GM12878 (cell line): ENCODE measurements at regions of chr1 and their contacts with region 1.

Region 1: DNA sequence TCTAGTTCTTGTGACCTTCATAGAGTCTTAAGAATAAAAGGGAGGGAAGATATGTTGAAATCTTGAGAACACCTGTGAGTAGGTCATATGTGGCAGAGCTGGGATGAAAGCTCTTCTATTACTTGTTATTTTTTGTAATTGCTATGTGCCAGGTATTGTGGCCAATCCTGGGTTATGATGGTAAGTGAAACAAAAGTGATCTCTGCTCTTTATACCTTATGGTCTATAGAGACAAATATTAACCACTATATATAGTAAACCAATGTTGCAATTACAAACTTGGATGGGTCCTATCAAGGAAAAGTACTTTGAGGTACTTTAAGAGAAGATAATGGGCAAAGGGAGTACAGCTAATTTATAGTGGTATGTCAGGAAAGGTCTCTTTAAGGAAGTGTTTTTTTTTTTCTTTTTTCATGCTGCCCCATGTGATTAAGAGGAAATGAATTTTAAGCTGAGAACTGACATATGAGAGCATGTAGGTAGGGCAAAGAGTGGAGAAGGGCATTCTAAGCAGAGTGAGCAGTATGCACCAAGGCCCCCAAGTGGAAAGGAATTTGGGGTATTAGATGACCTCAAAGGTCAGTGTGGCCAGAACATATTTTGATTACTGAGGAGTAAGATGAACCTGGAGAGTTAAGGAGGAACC is 43.3 kb downstream of the POU2F1 start:
- DNase-seq: no peak
- ATAC-seq: peak; percentile 65
- H3K4me3 ChIP-seq: no peak overlapping the region
- H3K27ac ChIP-seq: peak overlapping the region; percentile 42
- H3K4me1 ChIP-seq: peaks cover 10% of the 10 kb centered on the region; the same call in 1 of the 2 replicates
- H3K27me3 ChIP-seq: no peaks in the 10 kb centered on the region
- CTCF ChIP-seq: no peak
- EP300 ChIP-seq: no peak
- POLR2A ChIP-seq: no peak
- RAD21 ChIP-seq: no peak

Region 2: GRCh38 chr1:167076136-167076710 is 187.7 kb before region 1 on chr1:
- CTCF ChIA-PET with region 1: no interaction called
- POLR2A ChIA-PET with region 1: no interaction called
- RAD21 ChIA-PET with region 1: no interaction called
- SMC1A ChIA-PET with region 1: no interaction called
- in situ Hi-C with region 1: no loop called
- intact Hi-C with region 1: no loop called
- DNase-seq: no peak
- ATAC-seq: peak; percentile 49
- H3K4me3 ChIP-seq: no peak overlapping the region
- H3K27ac ChIP-seq: no peak overlapping the region
- H3K4me1 ChIP-seq: no peaks in the 10 kb centered on the region
- H3K27me3 ChIP-seq: no peaks in the 10 kb centered on the region
- CTCF ChIP-seq: no peak
- EP300 ChIP-seq: no peak
- POLR2A ChIP-seq: no peak
- RAD21 ChIP-seq: no peak

Region 3: DNA sequence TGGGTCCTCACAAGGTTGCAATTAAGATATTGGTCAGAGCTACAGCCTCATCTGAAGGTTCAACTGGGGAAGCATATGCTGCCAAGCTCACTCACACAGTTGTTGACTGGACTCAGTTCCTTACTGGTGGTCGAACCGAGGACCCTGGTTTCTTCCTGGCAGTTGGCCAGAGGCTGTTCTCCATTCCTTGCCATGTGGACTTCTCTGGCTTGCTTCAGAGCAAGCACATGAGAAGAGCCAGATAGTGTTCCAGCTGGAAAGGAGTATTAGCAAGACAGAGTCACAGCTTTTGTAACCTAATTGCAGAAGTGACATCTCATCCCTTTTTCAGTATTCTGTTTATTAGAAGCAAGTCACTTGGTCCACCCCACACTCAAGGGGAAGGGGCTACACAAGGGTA is 19.7 kb before region 1 on chr1:
- CTCF ChIA-PET with region 1: interaction called, 15 read pairs
- POLR2A ChIA-PET with region 1: interaction called, 9 read pairs
- RAD21 ChIA-PET with region 1: interaction called, 9 read pairs
- SMC1A ChIA-PET with region 1: interaction called, 73 read pairs
- in situ Hi-C with region 1: no loop called
- intact Hi-C with region 1: no loop called
- DNase-seq: no peak
- ATAC-seq: no peak
- H3K4me3 ChIP-seq: no peak overlapping the region
- H3K27ac ChIP-seq: no peak overlapping the region
- H3K4me1 ChIP-seq: peaks cover 12% of the 10 kb centered on the region
- H3K27me3 ChIP-seq: no peaks in the 10 kb centered on the region
- CTCF ChIP-seq: no peak
- EP300 ChIP-seq: no peak
- POLR2A ChIP-seq: no peak
- RAD21 ChIP-seq: no peak

Region 4: GRCh38 chr1:167297222-167298214 is 33.6 kb after region 1 on chr1:
- CTCF ChIA-PET with region 1: interaction called, 3 read pairs
- POLR2A ChIA-PET with region 1: interaction called, 10 read pairs
- RAD21 ChIA-PET with region 1: interaction called, 4 read pairs
- SMC1A ChIA-PET with region 1: interaction called, 5 read pairs
- in situ Hi-C with region 1: no loop called
- intact Hi-C with region 1: no loop called
- DNase-seq: no peak
- ATAC-seq: 0 out of 3 replicates have a peak, but pooled peaks have one; percentile 22
- H3K4me3 ChIP-seq: no peak overlapping the region
- H3K27ac ChIP-seq: no peak overlapping the region
- H3K4me1 ChIP-seq: no peaks in the 10 kb centered on the region
- H3K27me3 ChIP-seq: no peaks in the 10 kb centered on the region
- CTCF ChIP-seq: no peak
- EP300 ChIP-seq: no peak
- POLR2A ChIP-seq: no peak
- RAD21 ChIP-seq: no peak

Region 5: GRCh38 chr1:167387251-167387910 is 123.4 kb after region 1 on chr1:
- CTCF ChIA-PET with region 1: interaction called, 20 read pairs
- POLR2A ChIA-PET with region 1: no interaction called
- RAD21 ChIA-PET with region 1: interaction called, 5 read pairs
- SMC1A ChIA-PET with region 1: interaction called, 20 read pairs
- in situ Hi-C with region 1: no loop called
- intact Hi-C with region 1: no loop called
- DNase-seq: no peak
- ATAC-seq: no peak
- H3K4me3 ChIP-seq: no peak overlapping the region
- H3K27ac ChIP-seq: no peak overlapping the region
- H3K4me1 ChIP-seq: no peaks in the 10 kb centered on the region
- H3K27me3 ChIP-seq: no peaks in the 10 kb centered on the region
- CTCF ChIP-seq: no peak
- EP300 ChIP-seq: no peak
- POLR2A ChIP-seq: no peak
- RAD21 ChIP-seq: no peak

Region 6: DNA sequence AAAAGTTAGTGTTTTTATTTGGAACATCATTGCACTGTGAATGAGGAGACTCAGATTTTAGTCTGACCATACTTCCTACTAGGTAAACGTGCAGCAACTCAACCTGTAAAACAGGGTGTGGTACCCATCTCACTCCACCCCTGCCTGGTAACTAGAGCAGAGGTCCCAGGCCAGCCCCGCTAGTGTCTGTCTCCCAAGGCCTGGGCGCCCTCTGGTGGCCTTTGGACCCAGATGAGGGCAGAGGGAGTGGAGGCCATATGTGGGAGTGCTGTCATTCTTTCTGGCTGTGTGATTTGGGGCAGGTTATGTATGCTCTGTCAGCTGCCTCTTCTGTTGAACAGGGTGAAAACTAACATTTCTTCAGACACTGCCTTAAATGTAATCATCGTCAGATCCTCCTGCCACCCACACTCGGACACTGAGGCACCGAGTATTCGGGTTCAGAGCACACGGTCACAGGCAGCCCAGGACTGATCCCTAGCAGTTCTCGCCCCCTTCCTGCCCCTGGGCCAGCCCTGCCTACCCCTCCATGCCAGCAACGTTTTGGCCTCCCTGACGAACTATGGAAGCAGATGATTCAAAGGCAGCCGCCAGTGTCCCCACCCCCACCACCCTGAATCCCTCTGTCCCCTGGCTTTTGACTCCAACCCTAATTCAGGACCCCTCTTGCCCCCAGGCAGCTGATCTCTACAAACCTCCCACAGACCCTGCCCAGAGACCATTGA is 178.3 kb after region 1 on chr1:
- CTCF ChIA-PET with region 1: interaction called, 55 read pairs
- POLR2A ChIA-PET with region 1: no interaction called
- RAD21 ChIA-PET with region 1: interaction called, 17 read pairs
- SMC1A ChIA-PET with region 1: interaction called, 43 read pairs
- in situ Hi-C with region 1: loop called (anchors 10 kb)
- intact Hi-C with region 1: loop called (anchors 1 kb)
- DNase-seq: no peak
- ATAC-seq: peak; percentile 98
- H3K4me3 ChIP-seq: no peak overlapping the region
- H3K27ac ChIP-seq: no peak overlapping the region
- H3K4me1 ChIP-seq: peaks cover 8% of the 10 kb centered on the region
- H3K27me3 ChIP-seq: peaks cover 0 to 3% of the 10 kb centered on the region in 2 experiments; a peak in 1 of 4 replicates
- CTCF ChIP-seq: peak; percentile 92
- EP300 ChIP-seq: no peak
- POLR2A ChIP-seq: no peak
- RAD21 ChIP-seq: peak; percentile 98

Region 7: GRCh38 chr1:167542109-167543032 is 278.4 kb after region 1 on chr1:
- CTCF ChIA-PET with region 1: interaction called, 28 read pairs
- POLR2A ChIA-PET with region 1: no interaction called
- RAD21 ChIA-PET with region 1: interaction called, 10 read pairs
- SMC1A ChIA-PET with region 1: interaction called, 23 read pairs
- in situ Hi-C with region 1: loop called (anchors 5 kb)
- intact Hi-C with region 1: loop called (anchors 5 kb)
- DNase-seq: no peak
- ATAC-seq: peak; percentile 32
- H3K4me3 ChIP-seq: peak overlapping the region; percentile 23; the same call in 1 of the 2 replicates
- H3K27ac ChIP-seq: peak overlapping the region; percentile 45; the same call in 1 of the 2 replicates
- H3K4me1 ChIP-seq: peaks cover 59% of the 10 kb centered on the region
- H3K27me3 ChIP-seq: no peaks in the 10 kb centered on the region
- CTCF ChIP-seq: no peak
- EP300 ChIP-seq: no peak
- POLR2A ChIP-seq: no peak
- RAD21 ChIP-seq: no peak